Activated T-helper 2 cell treated with anti-CD3 and anti-CD28 coated beads, Interferon-gamma antibody, Interleukin-2, Interleukin-4, amounts not matched to agents 10 μg/mL and 5 μg/mL and 100 μg/mL, durations not matched to agents 14 hours and 24 hours and 36 hours (primary cell): ENCODE measurements at regions of chr10 and their contacts with region 1.

Region 1: DNA sequence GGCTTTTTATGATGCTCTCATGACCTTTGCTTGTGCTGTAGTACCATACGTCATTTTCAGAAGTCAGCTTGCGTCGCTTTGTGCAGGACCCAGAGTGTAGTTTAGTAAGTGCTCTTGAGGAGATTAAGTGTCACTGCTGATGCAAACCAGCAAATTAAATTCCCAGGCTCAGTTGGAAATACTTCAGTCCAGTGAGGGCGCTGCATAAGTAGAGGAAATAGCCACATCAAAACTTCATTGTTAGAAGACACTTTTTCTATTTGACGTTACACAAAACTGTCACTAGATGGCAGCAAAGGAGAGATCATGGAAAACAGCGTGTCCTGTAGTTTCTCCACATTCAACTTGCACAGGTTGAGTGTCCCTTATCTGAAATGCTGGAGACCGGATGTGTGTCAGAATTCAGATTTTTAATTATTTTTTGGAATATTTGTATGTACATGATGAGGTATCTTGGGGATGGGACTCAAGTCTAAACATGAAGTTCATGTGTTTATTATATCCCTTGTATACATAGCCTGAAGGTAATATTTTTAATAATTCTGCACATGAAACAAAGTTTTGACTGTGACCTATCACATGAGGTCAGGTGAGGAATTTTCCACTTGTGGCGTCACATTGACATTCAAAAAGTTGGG is 7.9 kb downstream of the ZNF22 start:
- DNase-seq: no peak
- H3K4me3 Mint-ChIP-seq: no peak overlapping the region
- H3K27ac Mint-ChIP-seq: no peak overlapping the region
- H3K4me1 Mint-ChIP-seq: peaks cover 2% of the 10 kb centered on the region
- H3K27me3 Mint-ChIP-seq: peaks cover 4% of the 10 kb centered on the region

Region 2: GRCh38 chr10:43816351-43817321 is 1192.0 kb before region 1 on chr10:
- intact Hi-C with region 1: loop called (anchors 10 kb)
- DNase-seq: peak; percentile 75
- H3K4me3 Mint-ChIP-seq: peak overlapping the region; percentile 10
- H3K27ac Mint-ChIP-seq: peak overlapping the region; percentile 87
- H3K4me1 Mint-ChIP-seq: peaks cover 45% of the 10 kb centered on the region
- H3K27me3 Mint-ChIP-seq: no peaks in the 10 kb centered on the region

Region 3: DNA sequence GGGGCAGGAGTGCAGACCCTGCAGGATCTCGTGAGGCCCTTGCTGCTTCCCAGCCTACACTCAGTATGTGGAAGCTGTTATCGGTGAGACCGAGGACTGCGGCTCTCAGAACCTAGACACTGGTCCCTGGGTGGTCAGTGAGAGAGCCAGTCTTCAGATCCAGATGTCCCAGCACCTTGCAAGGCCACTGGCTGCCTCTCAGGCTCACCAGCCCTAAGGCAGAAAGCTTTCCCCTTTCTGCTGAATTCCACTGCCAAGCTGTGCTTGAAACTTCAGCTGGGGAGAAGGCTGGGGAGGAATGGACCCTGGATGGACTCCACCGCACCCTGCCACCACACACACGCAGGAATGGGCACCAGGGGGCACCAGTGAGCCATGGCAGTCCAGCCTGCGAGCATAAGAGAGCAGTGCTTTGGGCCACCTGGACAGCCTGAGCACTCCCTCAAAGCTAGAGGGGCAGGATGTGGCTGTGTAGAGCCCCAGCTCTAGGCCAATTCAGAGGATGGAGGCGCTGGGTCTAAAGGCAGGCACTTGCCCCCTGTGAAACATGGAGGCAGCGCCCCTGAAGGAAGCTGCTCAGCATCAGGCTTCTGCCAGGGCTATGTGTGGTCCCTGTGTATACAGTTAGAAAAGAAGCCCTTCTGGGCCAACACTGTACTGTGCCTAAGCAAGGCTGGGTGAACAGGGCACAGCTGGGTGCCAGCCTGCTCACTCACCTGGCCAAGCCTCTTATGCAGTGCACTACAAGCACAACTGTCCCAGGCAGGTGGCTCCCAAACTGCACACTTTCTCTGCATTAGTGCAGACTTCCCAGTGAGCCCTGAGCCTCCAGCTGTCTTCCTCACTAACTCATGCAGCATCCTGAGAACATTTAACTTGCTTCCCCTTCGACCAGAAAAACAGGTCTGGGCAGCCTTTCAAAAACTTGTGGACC is 75.9 kb before region 1 on chr10:
- intact Hi-C with region 1: loop called (anchors 2 kb)
- DNase-seq: peak; percentile 74
- H3K4me3 Mint-ChIP-seq: no peak overlapping the region
- H3K27ac Mint-ChIP-seq: no peak overlapping the region
- H3K4me1 Mint-ChIP-seq: peaks cover 8% of the 10 kb centered on the region
- H3K27me3 Mint-ChIP-seq: no peaks in the 10 kb centered on the region

Region 4: DNA sequence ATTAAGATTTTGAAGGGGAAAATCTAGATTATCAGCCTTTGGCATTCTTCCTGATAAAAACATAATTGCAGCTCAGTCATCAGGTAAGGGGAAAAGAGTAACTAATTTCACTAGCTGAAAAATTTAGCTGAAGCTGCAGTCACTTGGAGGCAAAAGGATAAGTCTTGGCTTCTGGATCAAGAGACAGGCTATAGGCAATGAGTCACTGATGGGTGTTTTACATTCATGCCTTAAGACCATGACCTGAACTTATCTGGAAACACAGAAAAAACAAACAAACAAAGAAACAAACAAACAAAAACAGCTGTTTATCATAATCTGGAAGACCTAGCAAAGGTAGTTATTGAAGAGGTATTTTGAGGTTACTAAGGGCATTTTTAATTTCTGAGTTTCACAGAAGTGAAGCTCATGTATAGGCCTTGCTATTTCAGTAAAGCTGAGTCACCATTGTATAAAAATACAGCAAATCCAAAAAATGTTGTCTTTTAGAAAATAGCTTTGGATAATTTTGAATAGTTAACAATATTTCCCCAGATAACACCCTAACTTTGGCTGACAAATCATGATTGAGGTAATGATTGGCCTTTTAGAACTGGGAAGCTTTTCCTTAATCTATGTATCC is 32.4 kb after region 1 on chr10:
- intact Hi-C with region 1: no loop called
- DNase-seq: no peak
- H3K4me3 Mint-ChIP-seq: no peak overlapping the region
- H3K27ac Mint-ChIP-seq: no peak overlapping the region
- H3K4me1 Mint-ChIP-seq: no peaks in the 10 kb centered on the region
- H3K27me3 Mint-ChIP-seq: peaks cover 6% of the 10 kb centered on the region

Region 5: DNA sequence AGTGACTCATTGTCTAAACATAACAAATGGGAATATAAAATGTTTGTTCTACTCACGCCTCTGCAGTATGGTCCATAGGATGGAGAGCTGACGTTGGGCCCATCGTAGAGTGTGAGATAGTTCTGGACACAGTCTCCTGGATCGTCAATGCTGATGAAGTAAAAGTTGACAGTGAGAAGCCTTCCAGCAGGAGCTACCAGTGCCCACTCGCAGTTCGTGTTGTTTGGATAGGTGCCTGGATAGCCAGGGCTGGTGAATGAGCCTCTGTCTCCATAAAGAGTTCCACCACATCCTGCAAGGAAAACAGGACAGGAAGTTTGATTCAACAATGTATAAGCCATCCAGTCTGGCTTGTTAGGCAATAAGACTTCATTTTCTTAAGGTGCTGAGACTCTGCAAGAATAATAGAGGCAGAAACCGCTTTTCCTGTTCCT is 227.2 kb after region 1 on chr10:
- intact Hi-C with region 1: loop called (anchors 2 kb)
- DNase-seq: no peak
- H3K4me3 Mint-ChIP-seq: no peak overlapping the region
- H3K27ac Mint-ChIP-seq: no peak overlapping the region
- H3K4me1 Mint-ChIP-seq: peaks cover 3% of the 10 kb centered on the region
- H3K27me3 Mint-ChIP-seq: no peaks in the 10 kb centered on the region

Region 6: DNA sequence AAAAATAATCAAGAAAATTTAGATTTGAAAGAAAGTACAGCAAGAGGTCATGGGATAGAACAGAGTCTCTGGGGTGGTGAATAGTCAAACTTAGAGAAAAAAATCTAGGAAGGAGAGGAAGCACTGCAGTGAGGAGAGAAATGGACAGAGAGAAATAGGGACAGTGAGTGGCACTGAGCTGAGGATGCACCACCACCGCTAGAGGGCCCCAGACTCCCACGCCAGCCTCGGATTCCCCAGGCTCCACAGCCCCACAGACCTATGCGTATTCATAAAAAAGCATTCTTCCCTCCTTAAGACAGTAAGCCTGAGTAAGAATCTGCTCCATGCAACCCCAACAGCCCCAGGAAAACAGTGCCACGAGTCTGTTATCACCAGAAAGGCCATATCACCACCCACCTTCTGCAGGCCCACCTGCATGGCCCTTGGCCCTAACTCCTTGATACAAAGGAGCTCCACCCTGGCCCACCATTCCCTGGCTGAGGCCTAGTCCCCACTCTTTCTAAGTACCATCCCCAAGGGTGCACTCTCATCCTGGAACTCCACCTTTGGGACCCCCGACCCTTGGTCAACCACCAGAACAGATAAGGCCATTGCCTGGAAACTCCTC is 456.4 kb after region 1 on chr10:
- intact Hi-C with region 1: loop called (anchors 10 kb)
- DNase-seq: peak; percentile 63
- H3K4me3 Mint-ChIP-seq: no peak overlapping the region
- H3K27ac Mint-ChIP-seq: no peak overlapping the region
- H3K4me1 Mint-ChIP-seq: peaks cover 29% of the 10 kb centered on the region
- H3K27me3 Mint-ChIP-seq: no peaks in the 10 kb centered on the region

Region 7: DNA sequence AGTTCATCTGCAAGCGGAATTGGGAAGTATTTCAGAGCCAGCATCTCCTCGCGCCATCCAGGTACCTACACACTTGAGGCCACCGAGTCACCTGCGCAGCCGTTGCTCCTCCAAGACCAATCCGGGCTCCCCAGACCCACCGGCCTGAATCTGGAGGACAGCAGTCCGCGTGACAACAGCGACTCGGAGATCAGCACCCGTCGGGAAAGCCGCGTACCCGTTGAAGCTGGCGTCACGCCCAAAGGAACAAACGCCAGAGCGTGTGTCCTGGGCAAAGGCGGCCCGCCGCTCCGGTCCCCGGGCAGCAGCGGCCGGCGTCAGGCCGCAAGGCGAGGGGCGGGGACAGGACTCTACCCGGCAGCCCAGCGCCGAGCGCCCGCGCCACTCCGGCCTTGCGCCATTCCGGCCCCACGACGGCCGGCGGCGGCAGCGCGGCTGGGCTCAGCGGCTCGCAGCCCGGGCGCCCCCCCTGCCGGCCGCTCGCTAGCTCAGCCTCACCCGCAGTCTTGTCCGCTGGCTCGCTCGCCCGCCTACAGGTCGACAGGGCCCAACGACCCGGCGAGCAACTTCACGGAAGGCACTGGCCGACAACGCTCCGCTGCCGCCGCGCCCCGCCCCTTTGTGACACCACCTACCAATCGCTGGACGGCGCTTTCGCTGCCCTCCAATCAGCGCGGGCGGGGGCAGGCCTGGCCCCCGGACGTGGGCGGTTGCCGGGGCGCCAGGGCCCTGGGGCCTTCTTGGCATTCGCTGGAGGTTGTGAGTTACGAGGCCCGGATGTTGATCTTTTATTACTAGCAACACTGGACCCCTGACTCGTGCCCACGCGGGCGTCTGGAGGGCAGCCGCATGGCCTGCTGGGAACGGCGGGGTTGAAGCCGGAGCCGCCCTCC is 663.8 kb after region 1 on chr10 and contains the start of gene ZFAND4:
- intact Hi-C with region 1: loop called (anchors 10 kb)
- DNase-seq: peak; percentile 93
- H3K4me3 Mint-ChIP-seq: peak within 1 kb of the TSS; percentile 85
- H3K27ac Mint-ChIP-seq: peak within 1 kb of the TSS; percentile 71
- H3K4me1 Mint-ChIP-seq: peaks cover 31% of the 10 kb centered on the region
- H3K27me3 Mint-ChIP-seq: no peaks in the 10 kb centered on the region
- total RNA-seq, gene ZFAND4: 9.2 and 9.3 TPM in 2 replicates